ENCODE measurements at regions of chr1 and their contacts with region 1.

Region 1: GRCh38 chr1:156860113-156860627 is 495 bp upstream of the NTRK1 start:
- DNase-seq: peak; percentile 76
- ATAC-seq: peak; percentile 63
- H3K4me3 Mint-ChIP-seq: peak overlapping the region; percentile 89
- H3K27ac Mint-ChIP-seq: no peak overlapping the region
- H3K4me1 Mint-ChIP-seq: peaks cover 10% of the 10 kb centered on the region
- H3K27me3 Mint-ChIP-seq: peaks cover 92% of the 10 kb centered on the region
- CTCF ChIP-seq: peak; percentile 53

Region 2: GRCh38 chr1:156705918-156706656 is 154.1 kb before region 1 on chr1:
- CTCF ChIA-PET with region 1: interaction called, 38 read pairs
- POLR2A ChIA-PET with region 1: no interaction called
- DNase-seq: peak; percentile 94
- ATAC-seq: peak; percentile 45
- H3K4me3 Mint-ChIP-seq: peak overlapping the region; percentile 84
- H3K27ac Mint-ChIP-seq: peak overlapping the region; percentile 96
- H3K4me1 Mint-ChIP-seq: peaks cover 62% of the 10 kb centered on the region
- H3K27me3 Mint-ChIP-seq: peaks cover 23% of the 10 kb centered on the region
- CTCF ChIP-seq: peak; percentile 96

Region 3: GRCh38 chr1:156760097-156760803 is 99.9 kb before region 1 on chr1:
- CTCF ChIA-PET with region 1: no interaction called
- POLR2A ChIA-PET with region 1: no interaction called
- DNase-seq: no peak
- ATAC-seq: peak; percentile 44
- H3K4me3 Mint-ChIP-seq: no peak overlapping the region
- H3K27ac Mint-ChIP-seq: no peak overlapping the region
- H3K4me1 Mint-ChIP-seq: peaks cover 4% of the 10 kb centered on the region; the same call in 1 of the 2 replicates
- H3K27me3 Mint-ChIP-seq: no peaks in the 10 kb centered on the region
- CTCF ChIP-seq: no peak

Region 4: DNA sequence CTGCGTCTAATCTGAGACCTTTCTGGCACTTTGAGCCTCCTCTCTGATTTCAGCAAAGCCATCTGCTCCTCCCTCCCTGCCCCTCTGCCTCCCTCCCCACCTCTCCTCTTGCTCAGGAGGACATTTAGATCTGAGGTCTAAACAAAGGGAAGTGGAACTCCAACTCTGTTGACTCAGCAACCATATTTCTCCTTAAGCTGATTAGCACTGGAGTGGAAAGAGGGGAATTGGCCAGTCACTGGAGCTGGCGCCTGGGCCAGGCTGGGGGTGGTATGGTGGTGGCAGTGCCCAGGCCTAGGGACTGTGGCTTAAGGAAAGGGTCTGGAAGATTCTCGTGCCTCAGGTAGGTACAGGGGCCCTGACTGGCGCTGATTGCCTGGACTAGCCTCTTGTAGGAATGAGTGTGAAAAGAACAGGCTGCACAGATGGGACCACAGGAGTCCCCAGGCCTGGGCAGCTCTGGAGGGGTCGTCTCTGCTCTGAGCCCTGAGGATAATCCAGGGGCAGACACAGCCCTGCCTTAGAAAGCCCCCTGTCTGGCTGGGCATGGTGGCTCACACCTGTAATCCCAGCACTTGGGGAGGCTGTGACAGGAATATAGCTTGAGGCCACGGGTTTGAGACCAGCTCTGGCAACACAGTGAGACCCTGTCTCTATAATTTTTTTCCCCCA is 55.5 kb before region 1 on chr1:
- CTCF ChIA-PET with region 1: interaction called, 53 read pairs
- POLR2A ChIA-PET with region 1: interaction called, 3 read pairs
- DNase-seq: no peak
- ATAC-seq: no peak
- H3K4me3 Mint-ChIP-seq: no peak overlapping the region
- H3K27ac Mint-ChIP-seq: no peak overlapping the region
- H3K4me1 Mint-ChIP-seq: no peaks in the 10 kb centered on the region
- H3K27me3 Mint-ChIP-seq: no peaks in the 10 kb centered on the region
- CTCF ChIP-seq: no peak

Region 5: GRCh38 chr1:156845055-156845952 is 14.9 kb before region 1 on chr1:
- CTCF ChIA-PET with region 1: interaction called, 177 read pairs
- POLR2A ChIA-PET with region 1: interaction called, 8 read pairs
- DNase-seq: peak; percentile 54
- ATAC-seq: peak; percentile 53
- H3K4me3 Mint-ChIP-seq: peak overlapping the region; percentile 72
- H3K27ac Mint-ChIP-seq: no peak overlapping the region
- H3K4me1 Mint-ChIP-seq: peaks cover 16% of the 10 kb centered on the region
- H3K27me3 Mint-ChIP-seq: peaks cover 94% of the 10 kb centered on the region
- CTCF ChIP-seq: no peak

Region 6: GRCh38 chr1:156910309-156910782 is 50.2 kb after region 1 on chr1:
- CTCF ChIA-PET with region 1: interaction called, 20 read pairs
- POLR2A ChIA-PET with region 1: no interaction called
- DNase-seq: peak; percentile 82
- ATAC-seq: peak; percentile 71
- H3K4me3 Mint-ChIP-seq: peak overlapping the region; percentile 67
- H3K27ac Mint-ChIP-seq: no peak overlapping the region
- H3K4me1 Mint-ChIP-seq: peaks cover 17% of the 10 kb centered on the region
- H3K27me3 Mint-ChIP-seq: peaks cover 17% of the 10 kb centered on the region
- CTCF ChIP-seq: peak; percentile 98